ENCODE measurements at regions of chr11 and their contacts with region 1.

Region 1: GRCh38 chr11:73965076-73965860 is 14.4 kb downstream of the DNAJB13 start:
- DNase-seq: no peak
- ATAC-seq: no peak
- H3K4me3 Mint-ChIP-seq: peak overlapping the region; percentile 23
- H3K27ac Mint-ChIP-seq: no peak overlapping the region
- H3K4me1 Mint-ChIP-seq: peaks cover 29% of the 10 kb centered on the region
- H3K27me3 Mint-ChIP-seq: no peaks in the 10 kb centered on the region

Region 2: GRCh38 chr11:73931039-73931645 is 34.1 kb before region 1 on chr11:
- POLR2A ChIA-PET with region 1: no interaction called
- DNase-seq: no peak
- ATAC-seq: peak; percentile 78
- H3K4me3 Mint-ChIP-seq: no peak overlapping the region
- H3K27ac Mint-ChIP-seq: no peak overlapping the region
- H3K4me1 Mint-ChIP-seq: no peaks in the 10 kb centered on the region
- H3K27me3 Mint-ChIP-seq: no peaks in the 10 kb centered on the region

Region 3: DNA sequence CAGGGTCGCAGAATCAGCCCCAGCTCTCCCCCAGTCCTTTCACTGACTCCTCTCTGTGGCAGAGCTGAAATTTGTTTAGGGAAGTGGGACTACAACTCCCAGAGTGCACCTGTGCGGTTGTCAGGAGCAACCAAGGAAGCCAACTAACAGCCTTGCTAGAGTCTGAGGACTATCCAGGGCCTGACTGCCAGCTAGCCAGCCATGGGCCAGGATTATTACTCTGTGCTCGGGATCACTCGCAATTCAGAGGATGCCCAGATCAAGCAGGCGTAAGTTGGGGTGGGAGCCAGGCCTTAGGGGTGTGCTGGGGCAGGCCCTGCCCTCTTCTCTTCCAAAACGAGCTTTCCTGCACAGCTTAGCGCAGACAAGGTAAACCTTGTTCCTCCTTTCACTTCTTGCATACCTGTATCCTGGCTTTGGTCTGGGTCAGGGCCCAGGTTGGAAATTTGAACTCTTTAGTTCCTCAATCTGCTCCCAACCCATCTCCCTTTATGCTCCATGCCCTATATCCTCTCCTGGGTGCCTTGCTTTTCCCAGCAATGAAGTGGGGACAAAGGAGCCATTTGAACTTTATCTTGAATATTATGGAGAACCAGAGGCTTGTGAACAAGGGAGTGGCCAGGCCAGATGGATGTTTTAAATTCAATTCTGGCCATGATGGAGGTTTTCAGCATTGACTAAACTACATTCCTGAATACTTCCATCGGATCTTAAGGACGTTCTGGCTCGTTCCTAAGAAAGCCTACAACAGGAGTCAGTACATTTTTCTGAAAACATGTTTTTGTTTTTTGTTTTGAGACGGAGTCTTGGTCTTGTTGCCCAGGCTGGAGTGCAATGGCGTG is 14.2 kb before region 1 on chr11 and contains the start of gene DNAJB13:
- POLR2A ChIA-PET with region 1: no interaction called
- DNase-seq: no peak
- ATAC-seq: no peak
- H3K4me3 Mint-ChIP-seq: no peak within 1 kb of the TSS
- H3K27ac Mint-ChIP-seq: no peak within 1 kb of the TSS
- H3K4me1 Mint-ChIP-seq: peaks cover 5% of the 10 kb centered on the region
- H3K27me3 Mint-ChIP-seq: peaks cover 5% of the 10 kb centered on the region
- total RNA-seq, gene DNAJB13: 0.47 TPM in 1 of 2 experiments, not detected in the other

Region 4: GRCh38 chr11:73995247-73995646 is 30.0 kb after region 1 on chr11:
- POLR2A ChIA-PET with region 1: interaction called, 12 read pairs
- DNase-seq: peak; percentile 1
- ATAC-seq: peak; percentile 82
- H3K4me3 Mint-ChIP-seq: peak overlapping the region; percentile 86
- H3K27ac Mint-ChIP-seq: peak overlapping the region; percentile 95
- H3K4me1 Mint-ChIP-seq: peaks cover 37% of the 10 kb centered on the region
- H3K27me3 Mint-ChIP-seq: no peaks in the 10 kb centered on the region

Region 5: DNA sequence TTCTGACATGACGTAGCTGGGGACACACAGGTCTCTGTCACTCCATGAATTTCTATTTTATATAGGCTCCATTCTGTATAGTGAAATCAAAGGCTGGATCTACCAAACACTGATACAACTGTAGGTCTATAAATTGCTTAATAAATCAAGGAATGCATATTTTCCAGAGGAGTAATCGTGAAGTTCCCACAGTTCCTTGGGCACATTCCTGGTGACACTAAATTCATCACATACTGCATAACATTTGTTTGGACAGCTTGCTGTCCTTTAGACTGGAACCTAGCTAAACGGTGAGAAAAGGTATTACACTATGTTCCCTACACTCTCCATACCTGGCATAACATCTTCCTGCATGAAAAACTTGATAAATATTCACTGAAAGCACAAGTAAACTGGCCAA is 85.2 kb after region 1 on chr11:
- POLR2A ChIA-PET with region 1: no interaction called
- DNase-seq: no peak
- ATAC-seq: no peak
- H3K4me3 Mint-ChIP-seq: no peak overlapping the region
- H3K27ac Mint-ChIP-seq: no peak overlapping the region
- H3K4me1 Mint-ChIP-seq: no peaks in the 10 kb centered on the region
- H3K27me3 Mint-ChIP-seq: no peaks in the 10 kb centered on the region

Region 6: GRCh38 chr11:74170694-74171629 is 205.7 kb after region 1 on chr11 and contains the starts of genes C2CD3 and PPME1:
- POLR2A ChIA-PET with region 1: interaction called, 20 read pairs
- DNase-seq: peak; percentile 92
- ATAC-seq: peak; percentile 97
- H3K4me3 Mint-ChIP-seq: no peak within 1 kb of the TSS
- H3K27ac Mint-ChIP-seq: no peak within 1 kb of the TSS
- H3K4me1 Mint-ChIP-seq: peaks cover 17% of the 10 kb centered on the region
- H3K27me3 Mint-ChIP-seq: no peaks in the 10 kb centered on the region
- total RNA-seq, gene C2CD3: 36.2 to 37.6 TPM
- total RNA-seq, gene PPME1: 29.2 to 29.7 TPM